T-cell (primary cell): ENCODE measurements at regions of chr15 and their contacts with region 1.

Region 1: GRCh38 chr15:40081691-40082194 is 26.9 kb downstream of the BMF start:
- DNase-seq: no peak
- ATAC-seq: peak; percentile 42 to 65 (median 54)
- H3K4me3 ChIP-seq: peak overlapping the region in 1 of 2 donors; percentile 35
- H3K4me3 Mint-ChIP-seq: peak overlapping the region; percentile 55 to 74 (median 59)
- H3K27ac ChIP-seq: no peak overlapping the region
- H3K27ac Mint-ChIP-seq: peak overlapping the region; percentile 28 to 54
- H3K4me1 ChIP-seq: peaks cover 18 to 32% of the 10 kb centered on the region in 2 experiments
- H3K4me1 Mint-ChIP-seq: peaks cover 22 to 29% (median 29%) of the 10 kb centered on the region in 3 donors
- H3K27me3 ChIP-seq: peaks cover 0 to 40% of the 10 kb centered on the region in 2 experiments
- H3K27me3 Mint-ChIP-seq: peaks cover 14 to 50% of the 10 kb centered on the region in 2 donors

Region 2: GRCh38 chr15:39404767-39405181 is 677.0 kb before region 1 on chr15:
- CTCF ChIA-PET with region 1: interaction called in 1 of 2 experiments, 14 read pairs
- POLR2A ChIA-PET with region 1: no interaction called
- DNase-seq: no peak
- ATAC-seq: no peak
- H3K4me3 ChIP-seq: no peak overlapping the region
- H3K4me3 Mint-ChIP-seq: no peak overlapping the region
- H3K27ac ChIP-seq: no peak overlapping the region
- H3K27ac Mint-ChIP-seq: no peak overlapping the region
- H3K4me1 ChIP-seq: no peaks in the 10 kb centered on the region
- H3K4me1 Mint-ChIP-seq: no peaks in the 10 kb centered on the region
- H3K27me3 ChIP-seq: no peaks in the 10 kb centered on the region
- H3K27me3 Mint-ChIP-seq: peaks cover 3 to 6% of the 10 kb centered on the region in 2 donors